Activated naive CD4-positive, alpha-beta T cell treated with anti-CD3 and anti-CD28 coated beads for 36 hours (primary cell): ENCODE measurements at regions of chr3 and their contacts with region 1.

Region 1: GRCh38 chr3:143847787-143848631 is at the start of gene SLC9A9:
- DNase-seq: peak; percentile 61
- H3K4me3 Mint-ChIP-seq: peak within 1 kb of the TSS; percentile 87
- H3K27ac Mint-ChIP-seq: peak within 1 kb of the TSS; percentile 80
- H3K4me1 Mint-ChIP-seq: peaks cover 49% of the 10 kb centered on the region
- H3K27me3 Mint-ChIP-seq: no peaks in the 10 kb centered on the region
- total RNA-seq, gene SLC9A9: 0.33 to 0.49 TPM

Region 2: GRCh38 chr3:143443851-143444331 is 404.1 kb before region 1 on chr3:
- CTCF ChIA-PET with region 1: no interaction called
- intact Hi-C with region 1: loop called (anchors 5 kb)
- DNase-seq: peak; percentile 60
- H3K4me3 Mint-ChIP-seq: no peak overlapping the region
- H3K27ac Mint-ChIP-seq: peak overlapping the region; percentile 10
- H3K4me1 Mint-ChIP-seq: peaks cover 32% of the 10 kb centered on the region
- H3K27me3 Mint-ChIP-seq: no peaks in the 10 kb centered on the region

Region 3: GRCh38 chr3:143775459-143775858 is 72.5 kb before region 1 on chr3:
- CTCF ChIA-PET with region 1: no interaction called
- intact Hi-C with region 1: loop called (anchors 1 kb)
- DNase-seq: peak; percentile 25
- H3K4me3 Mint-ChIP-seq: no peak overlapping the region
- H3K27ac Mint-ChIP-seq: no peak overlapping the region
- H3K4me1 Mint-ChIP-seq: peaks cover 3% of the 10 kb centered on the region
- H3K27me3 Mint-ChIP-seq: no peaks in the 10 kb centered on the region

Region 4: GRCh38 chr3:143825513-143825912 is 22.5 kb before region 1 on chr3:
- CTCF ChIA-PET with region 1: interaction called, 3 read pairs
- intact Hi-C with region 1: loop called (anchors 1 kb)
- DNase-seq: peak; percentile 39
- H3K4me3 Mint-ChIP-seq: no peak overlapping the region
- H3K27ac Mint-ChIP-seq: no peak overlapping the region
- H3K4me1 Mint-ChIP-seq: peaks cover 27% of the 10 kb centered on the region
- H3K27me3 Mint-ChIP-seq: no peaks in the 10 kb centered on the region